IMR-90 (cell line): ENCODE measurements at regions of chr19 and their contacts with region 1.

Region 1: GRCh38 chr19:3450796-3451411 is 29.4 kb downstream of the SMIM24 start:
- DNase-seq: peak; percentile 100
- ATAC-seq: peak; percentile 96
- H3K4me3 ChIP-seq: no peak overlapping the region
- H3K27ac ChIP-seq: peak overlapping the region; percentile 67
- H3K4me1 ChIP-seq: peaks cover 2% of the 10 kb centered on the region
- H3K27me3 ChIP-seq: no peaks in the 10 kb centered on the region
- CTCF ChIP-seq: no peak
- POLR2A ChIP-seq: no peak
- RAD21 ChIP-seq: no peak

Region 2: GRCh38 chr19:2912306-2912705 is 538.6 kb before region 1 on chr19:
- CTCF ChIA-PET with region 1: no interaction called
- POLR2A ChIA-PET with region 1: no interaction called
- dilution Hi-C with region 1: no loop called
- in situ Hi-C with region 1: no loop called
- intact Hi-C with region 1: no loop called
- DNase-seq: no peak
- ATAC-seq: no peak
- H3K4me3 ChIP-seq: no peak overlapping the region
- H3K27ac ChIP-seq: no peak overlapping the region
- H3K4me1 ChIP-seq: no peaks in the 10 kb centered on the region; the same call in 1 of the 2 replicates
- H3K27me3 ChIP-seq: no peaks in the 10 kb centered on the region
- CTCF ChIP-seq: no peak
- POLR2A ChIP-seq: no peak
- RAD21 ChIP-seq: no peak

Region 3: GRCh38 chr19:3403489-3404323 is 47.2 kb before region 1 on chr19:
- CTCF ChIA-PET with region 1: no interaction called
- POLR2A ChIA-PET with region 1: no interaction called
- dilution Hi-C with region 1: no loop called
- in situ Hi-C with region 1: no loop called
- intact Hi-C with region 1: loop called (anchors 2 kb)
- DNase-seq: peak; percentile 97
- ATAC-seq: peak; percentile 80
- H3K4me3 ChIP-seq: no peak overlapping the region
- H3K27ac ChIP-seq: peak overlapping the region; percentile 96
- H3K4me1 ChIP-seq: peaks cover 22% of the 10 kb centered on the region
- H3K27me3 ChIP-seq: no peaks in the 10 kb centered on the region
- CTCF ChIP-seq: no peak
- POLR2A ChIP-seq: 0 out of 2 replicates have a peak, but pooled peaks have one; percentile 48
- RAD21 ChIP-seq: no peak

Region 4: GRCh38 chr19:3434712-3435553 is 16.0 kb before region 1 on chr19:
- CTCF ChIA-PET with region 1: no interaction called
- POLR2A ChIA-PET with region 1: no interaction called
- dilution Hi-C with region 1: no loop called
- in situ Hi-C with region 1: no loop called
- intact Hi-C with region 1: loop called (anchors 1 kb)
- DNase-seq: peak; percentile 93
- ATAC-seq: peak; percentile 97
- H3K4me3 ChIP-seq: peak overlapping the region; percentile 51
- H3K27ac ChIP-seq: peak overlapping the region; percentile 98
- H3K4me1 ChIP-seq: peaks cover 8% of the 10 kb centered on the region
- H3K27me3 ChIP-seq: no peaks in the 10 kb centered on the region
- CTCF ChIP-seq: no peak
- POLR2A ChIP-seq: no peak
- RAD21 ChIP-seq: no peak

Region 5: DNA sequence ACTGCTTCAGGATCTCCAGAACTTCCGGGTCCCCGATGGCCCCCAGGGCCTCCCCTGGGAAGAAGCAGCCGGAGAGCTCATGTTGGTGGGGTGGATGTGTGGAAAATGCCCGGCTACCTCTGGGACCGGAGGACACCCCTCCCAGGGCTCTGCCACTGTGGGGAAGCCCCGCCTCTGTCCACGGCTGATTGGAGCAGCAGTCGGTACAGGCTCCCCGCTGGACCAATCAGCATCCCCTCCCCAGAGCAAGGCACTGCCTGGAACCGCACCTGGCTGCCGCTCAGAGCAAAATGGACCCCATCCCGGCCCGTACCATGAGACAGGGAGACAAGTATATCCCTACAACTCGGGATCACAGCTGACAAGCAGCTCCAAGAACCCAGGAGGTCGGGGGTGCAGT is 43.1 kb after region 1 on chr19:
- CTCF ChIA-PET with region 1: no interaction called
- POLR2A ChIA-PET with region 1: no interaction called
- dilution Hi-C with region 1: no loop called
- in situ Hi-C with region 1: no loop called
- intact Hi-C with region 1: no loop called
- DNase-seq: no peak
- ATAC-seq: peak; percentile 81
- H3K4me3 ChIP-seq: no peak overlapping the region
- H3K27ac ChIP-seq: no peak overlapping the region
- H3K4me1 ChIP-seq: no peaks in the 10 kb centered on the region
- H3K27me3 ChIP-seq: no peaks in the 10 kb centered on the region
- CTCF ChIP-seq: no peak
- POLR2A ChIP-seq: no peak
- RAD21 ChIP-seq: no peak